Esophagus muscularis mucosa (tissue), 4 donors: ENCODE measurements at regions of chr10 and their contacts with region 1.

Region 1: DNA sequence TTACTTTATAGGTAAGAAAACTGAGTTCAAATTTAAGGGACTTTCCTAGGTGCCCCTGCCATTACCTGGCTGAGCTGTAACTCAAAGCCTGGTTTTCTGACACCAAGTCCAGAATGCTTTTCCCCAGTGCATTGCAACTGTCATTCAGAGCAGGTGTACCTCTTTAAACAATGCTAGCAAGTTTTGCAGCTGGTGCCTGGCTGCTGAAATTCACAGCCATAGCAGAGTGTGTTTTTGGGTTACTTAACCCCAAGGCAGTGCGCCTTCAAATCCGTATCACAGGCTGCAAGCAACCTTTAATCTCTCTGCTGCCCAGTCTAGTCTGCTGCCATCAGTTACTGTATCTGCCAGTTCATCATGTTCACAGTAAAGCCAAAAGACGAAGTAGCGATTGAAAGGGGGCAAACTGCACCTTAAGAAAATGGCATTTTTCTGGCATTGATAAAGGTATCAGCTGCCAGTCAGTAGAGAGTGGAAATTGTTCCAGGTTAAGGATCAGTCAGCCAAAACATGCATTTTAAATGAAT is 265.4 kb downstream of the CSTF2T start:
- DNase-seq: no peak
- H3K4me3 ChIP-seq: no peak overlapping the region
- H3K27ac ChIP-seq: no peak overlapping the region
- H3K4me1 ChIP-seq: peaks cover 0 to 18% (median 7%) of the 10 kb centered on the region in 4 donors
- H3K27me3 ChIP-seq: no peaks in the 10 kb centered on the region
- CTCF ChIP-seq: no peak
- EP300 ChIP-seq: no peak
- POLR2A ChIP-seq: no peak

Region 2: GRCh38 chr10:50885097-50885859 is 548.7 kb before region 1 on chr10 and contains the start of gene A1CF:
- intact Hi-C with region 1: no loop called
- DNase-seq: no peak
- H3K4me3 ChIP-seq: no peak within 1 kb of the TSS
- H3K27ac ChIP-seq: no peak within 1 kb of the TSS
- H3K4me1 ChIP-seq: no peaks in the 10 kb centered on the region
- H3K27me3 ChIP-seq: no peaks in the 10 kb centered on the region
- CTCF ChIP-seq: no peak
- EP300 ChIP-seq: no peak
- POLR2A ChIP-seq: no peak
- total RNA-seq, gene A1CF: not detected

Region 3: GRCh38 chr10:51638737-51639136 is 204.7 kb after region 1 on chr10:
- intact Hi-C with region 1: no loop called
- DNase-seq: no peak
- H3K4me3 ChIP-seq: no peak overlapping the region
- H3K27ac ChIP-seq: no peak overlapping the region
- H3K4me1 ChIP-seq: peaks cover 0 to 4% (median 0%) of the 10 kb centered on the region in 4 donors
- H3K27me3 ChIP-seq: no peaks in the 10 kb centered on the region
- CTCF ChIP-seq: peak in 1 of 3 experiments; percentile 12
- EP300 ChIP-seq: no peak
- POLR2A ChIP-seq: no peak

Region 4: GRCh38 chr10:51950371-51950995 is 516.5 kb after region 1 on chr10:
- intact Hi-C with region 1: loop called (anchors 10 kb)
- DNase-seq: no peak
- H3K4me3 ChIP-seq: no peak overlapping the region
- H3K27ac ChIP-seq: peak overlapping the region in 1 of 4 donors; percentile 3
- H3K4me1 ChIP-seq: peaks cover 17 to 28% (median 20%) of the 10 kb centered on the region in 4 donors
- H3K27me3 ChIP-seq: no peaks in the 10 kb centered on the region
- CTCF ChIP-seq: no peak
- EP300 ChIP-seq: no peak
- POLR2A ChIP-seq: no peak